Dorsolateral prefrontal cortex (tissue), 120 donors: ENCODE measurements at regions of chr2 and their contacts with region 1.

Region 1: GRCh38 chr2:233566141-233566960 is at the start of gene USP40:
- DNase-seq: peak; percentile 66 to 88 (median 83)
- H3K4me3 ChIP-seq: peak within 1 kb of the TSS; percentile 66 to 99 (median 92)
- H3K27ac ChIP-seq: peak within 1 kb of the TSS; percentile 39 to 96 (median 87)
- H3K27me3 ChIP-seq: no peaks in the 10 kb centered on the region
- CTCF ChIP-seq: peak in 19 of 56 donors; percentile 1 to 46 (median 24)
- total RNA-seq, gene USP40: 26.9 to 83.4 (median 49.3) TPM

Region 2: DNA sequence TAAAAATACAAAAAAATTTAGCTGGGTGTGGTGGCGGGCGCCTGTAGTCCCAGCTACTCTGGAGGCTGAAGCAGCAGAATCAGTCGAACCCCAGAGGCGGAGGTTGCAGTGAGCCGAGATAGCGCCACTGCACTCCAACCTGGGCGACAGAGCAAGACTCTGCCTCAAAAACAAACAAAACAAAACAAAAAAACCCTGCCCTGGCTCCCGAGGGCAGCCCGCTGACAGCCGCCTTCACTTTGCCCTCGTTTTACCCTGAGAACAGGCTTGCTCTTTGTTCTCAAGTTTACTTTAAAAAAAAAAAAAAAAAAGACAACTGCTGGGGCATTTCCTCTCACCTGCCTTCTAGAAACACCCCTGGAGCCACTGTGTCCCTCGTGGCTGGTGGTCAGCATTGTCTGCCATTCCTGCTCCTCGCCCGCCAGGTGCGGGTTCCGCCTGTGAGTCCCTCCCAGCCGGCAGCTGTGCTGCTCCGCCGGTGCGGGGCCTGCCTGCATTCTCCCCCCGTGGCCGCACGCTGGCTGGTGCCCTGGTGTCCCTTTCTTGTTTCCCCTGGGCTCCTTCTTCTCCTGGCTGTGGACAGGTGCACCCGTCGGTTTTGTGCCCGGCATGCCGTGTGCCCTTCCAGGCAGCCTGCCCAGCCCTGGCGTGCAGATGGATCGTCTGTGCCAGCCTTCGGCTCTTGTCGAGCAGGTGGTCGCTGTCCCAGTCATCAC is 105.5 kb before region 1 on chr2:
- intact Hi-C with region 1: loop called in 1 of 2 experiments (anchors 10 kb)
- DNase-seq: peak in 3 of 10 donors; percentile 26 to 91 (median 63)
- H3K4me3 ChIP-seq: peak overlapping the region in 3 of 59 donors; percentile 6 to 30 (median 9)
- H3K27ac ChIP-seq: peak overlapping the region in 46 of 59 donors; percentile 11 to 80 (median 55)
- H3K27me3 ChIP-seq: no peaks in the 10 kb centered on the region
- CTCF ChIP-seq: no peak

Region 3: GRCh38 chr2:233503947-233504637 is 62.3 kb before region 1 on chr2:
- intact Hi-C with region 1: no loop called
- DNase-seq: no peak
- H3K4me3 ChIP-seq: no peak overlapping the region
- H3K27ac ChIP-seq: no peak overlapping the region
- H3K27me3 ChIP-seq: no peaks in the 10 kb centered on the region
- CTCF ChIP-seq: no peak